A549 (cell line): ENCODE measurements at regions of chr12 and their contacts with region 1.

Region 1: DNA sequence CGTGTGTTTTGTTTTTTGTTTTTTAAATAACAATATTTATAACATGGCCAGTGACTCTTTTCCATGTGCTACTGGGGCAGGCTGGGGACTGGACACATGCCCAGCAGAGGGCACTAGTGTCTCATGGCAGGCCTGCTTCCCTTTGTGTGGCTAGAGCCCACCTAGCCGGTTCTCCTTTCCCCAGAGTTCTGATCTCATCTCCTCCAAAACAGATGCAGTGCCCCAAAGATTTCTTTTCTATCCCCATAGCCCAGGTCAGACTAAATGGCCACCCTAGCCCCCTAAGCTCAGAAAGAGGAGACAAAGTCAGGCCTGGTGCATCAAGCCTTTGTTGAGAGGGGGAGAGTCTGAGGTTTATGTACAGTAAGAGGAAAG is 21.2 kb downstream of the PRPF40B start:
- DNase-seq: peak; percentile 68 to 86
- ATAC-seq: peak; percentile 68 to 92; a peak in 5 of 6 replicates
- H3K4me3 ChIP-seq: no peak overlapping the region
- H3K27ac ChIP-seq: no peak overlapping the region
- H3K4me1 ChIP-seq: no peaks in the 10 kb centered on the region
- CTCF ChIP-seq: peak; percentile 90
- EP300 ChIP-seq: no peak
- POLR2A ChIP-seq: no peak
- RAD21 ChIP-seq: peak; percentile 87 to 96

Region 2: GRCh38 chr12:49110464-49111155 is 534.0 kb before region 1 on chr12 and contains the start of gene LMBR1L:
- CTCF ChIA-PET with region 1: no interaction called
- POLR2A ChIA-PET with region 1: no interaction called
- DNase-seq: peak; percentile 99 to 100
- ATAC-seq: peak; percentile 98 to 99
- H3K4me3 ChIP-seq: peak within 1 kb of the TSS; percentile 89
- H3K27ac ChIP-seq: peak within 1 kb of the TSS; percentile 79 to 93
- H3K4me1 ChIP-seq: peaks cover 15% of the 10 kb centered on the region
- CTCF ChIP-seq: no peak
- EP300 ChIP-seq: no peak
- POLR2A ChIP-seq: peak; percentile 65
- RAD21 ChIP-seq: no peak
- polyA plus RNA-seq, gene LMBR1L: 25.1 and 35.7 TPM in 2 replicates

Region 3: GRCh38 chr12:49358483-49359141 is 286.0 kb before region 1 on chr12:
- CTCF ChIA-PET with region 1: no interaction called
- POLR2A ChIA-PET with region 1: no interaction called
- DNase-seq: peak; percentile 80 to 84
- ATAC-seq: peak; percentile 87 to 92
- H3K4me3 ChIP-seq: no peak overlapping the region
- H3K27ac ChIP-seq: peak overlapping the region; percentile 52 to 65; a peak in 5 of 6 replicates
- H3K4me1 ChIP-seq: peaks cover 28% of the 10 kb centered on the region
- CTCF ChIP-seq: peak; percentile 96
- EP300 ChIP-seq: no peak
- POLR2A ChIP-seq: no peak
- RAD21 ChIP-seq: peak; percentile 96 to 98

Region 4: GRCh38 chr12:49631336-49631907 is 13.2 kb before region 1 on chr12:
- CTCF ChIA-PET with region 1: interaction called, 41 read pairs
- POLR2A ChIA-PET with region 1: no interaction called
- DNase-seq: no peak
- ATAC-seq: no peak
- H3K4me3 ChIP-seq: no peak overlapping the region
- H3K27ac ChIP-seq: no peak overlapping the region
- H3K4me1 ChIP-seq: peaks cover 12% of the 10 kb centered on the region
- CTCF ChIP-seq: no peak
- EP300 ChIP-seq: no peak
- POLR2A ChIP-seq: no peak
- RAD21 ChIP-seq: no peak

Region 5: DNA sequence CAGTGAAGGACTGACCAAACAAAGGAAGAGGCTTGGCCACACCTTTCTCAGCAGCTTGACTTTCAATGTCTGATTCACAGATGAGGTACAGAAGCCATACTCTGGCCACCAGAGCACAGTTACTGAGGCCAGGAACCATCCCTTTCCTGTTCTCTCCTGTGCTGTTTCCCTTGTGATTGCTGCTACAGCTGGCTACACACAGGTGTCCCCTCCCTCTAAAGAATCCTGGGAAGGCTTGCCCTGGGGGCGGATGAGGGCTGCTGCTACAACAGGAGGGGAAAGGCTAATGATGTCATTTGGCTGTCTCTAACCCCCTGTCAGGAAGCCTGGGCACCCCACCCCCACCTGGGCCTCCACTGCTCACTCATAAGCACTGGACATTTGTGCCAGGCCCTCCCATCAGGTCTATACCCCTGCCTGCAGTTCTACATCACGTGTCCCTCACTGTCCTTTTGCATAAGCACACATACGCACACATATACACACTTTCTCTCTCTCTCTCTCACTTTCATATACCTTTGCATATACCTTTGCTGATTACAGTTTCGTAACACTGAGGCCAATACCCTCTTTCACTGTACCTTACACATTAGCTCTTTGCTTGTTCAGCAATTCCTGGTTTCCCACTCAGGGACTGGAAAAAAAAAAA is 20.1 kb after region 1 on chr12:
- CTCF ChIA-PET with region 1: interaction called, 16 read pairs
- POLR2A ChIA-PET with region 1: no interaction called
- DNase-seq: no peak
- ATAC-seq: no peak
- H3K4me3 ChIP-seq: no peak overlapping the region
- H3K27ac ChIP-seq: no peak overlapping the region
- H3K4me1 ChIP-seq: no peaks in the 10 kb centered on the region
- CTCF ChIP-seq: no peak
- EP300 ChIP-seq: no peak
- POLR2A ChIP-seq: no peak
- RAD21 ChIP-seq: no peak